Endothelial cell of umbilical vein (primary cell): ENCODE measurements at regions of chr12 and their contacts with region 1.

Region 1: DNA sequence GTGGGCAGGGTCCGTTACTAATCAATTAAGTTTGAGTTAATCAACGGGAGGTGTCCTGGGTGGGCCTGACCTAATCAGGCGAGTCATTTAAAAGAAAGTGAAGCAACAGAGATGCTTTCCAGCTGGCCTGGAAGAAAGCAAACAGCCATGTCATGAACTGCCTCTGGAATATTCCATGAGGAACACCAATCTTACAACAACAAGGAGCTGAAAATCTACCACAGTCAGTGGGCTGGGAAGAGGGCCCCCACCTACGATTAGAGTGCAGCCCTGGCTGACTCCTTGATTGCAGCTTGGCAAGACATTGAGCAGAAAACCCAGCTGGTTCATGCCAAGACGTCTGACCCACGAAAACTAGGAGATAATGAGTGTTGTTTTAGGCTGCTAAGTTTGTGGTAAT is 56.2 kb downstream of the SSPN start:
- DNase-seq: no peak
- H3K4me3 ChIP-seq: no peak overlapping the region
- H3K27ac ChIP-seq: no peak overlapping the region
- H3K4me1 ChIP-seq: peaks cover 5% of the 10 kb centered on the region
- H3K27me3 ChIP-seq: no peaks in the 10 kb centered on the region
- CTCF ChIP-seq: no peak
- POLR2A ChIP-seq: no peak

Region 2: DNA sequence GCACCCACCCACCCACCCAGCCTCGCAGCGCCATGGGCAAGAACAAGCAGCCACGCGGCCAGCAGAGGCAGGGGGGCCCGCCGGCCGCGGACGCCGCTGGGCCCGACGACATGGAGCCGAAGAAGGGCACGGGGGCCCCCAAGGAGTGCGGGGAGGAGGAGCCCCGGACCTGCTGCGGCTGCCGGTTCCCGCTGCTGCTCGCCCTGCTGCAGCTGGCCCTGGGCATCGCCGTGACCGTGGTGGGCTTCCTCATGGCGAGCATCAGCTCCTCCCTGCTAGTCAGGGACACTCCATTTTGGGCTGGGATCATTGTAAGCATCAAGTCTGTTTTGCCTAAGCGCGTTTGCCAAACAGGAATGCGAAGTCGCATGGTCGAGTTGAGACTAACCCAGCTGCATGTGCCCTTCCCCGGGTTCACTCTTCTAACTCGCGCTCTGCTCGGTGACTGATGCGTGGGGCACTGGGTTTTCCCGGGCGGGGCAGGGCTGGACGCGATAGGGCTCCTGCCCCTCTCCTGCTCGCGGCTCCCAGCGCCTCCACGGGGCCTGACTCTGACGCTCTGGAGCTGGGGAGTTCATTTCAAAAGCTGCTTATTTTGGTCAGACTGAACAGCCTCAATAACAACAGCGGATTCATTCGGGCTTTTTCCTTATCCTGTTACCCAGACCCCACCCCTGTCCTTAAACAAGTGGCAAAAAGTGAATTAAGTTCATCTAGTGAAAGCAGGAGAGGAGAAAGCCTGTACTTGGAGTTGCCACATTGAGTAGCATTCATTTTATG is 55.8 kb before region 1 on chr12:
- CTCF ChIA-PET with region 1: no interaction called
- POLR2A ChIA-PET with region 1: no interaction called
- dilution Hi-C with region 1: no loop called
- intact Hi-C with region 1: no loop called
- DNase-seq: peak; percentile 47
- H3K4me3 ChIP-seq: peak overlapping the region; percentile 0 to 59 (median 31)
- H3K27ac ChIP-seq: no peak overlapping the region
- H3K4me1 ChIP-seq: peaks cover 4% of the 10 kb centered on the region
- H3K27me3 ChIP-seq: no peaks in the 10 kb centered on the region
- CTCF ChIP-seq: no peak
- POLR2A ChIP-seq: no peak

Region 3: DNA sequence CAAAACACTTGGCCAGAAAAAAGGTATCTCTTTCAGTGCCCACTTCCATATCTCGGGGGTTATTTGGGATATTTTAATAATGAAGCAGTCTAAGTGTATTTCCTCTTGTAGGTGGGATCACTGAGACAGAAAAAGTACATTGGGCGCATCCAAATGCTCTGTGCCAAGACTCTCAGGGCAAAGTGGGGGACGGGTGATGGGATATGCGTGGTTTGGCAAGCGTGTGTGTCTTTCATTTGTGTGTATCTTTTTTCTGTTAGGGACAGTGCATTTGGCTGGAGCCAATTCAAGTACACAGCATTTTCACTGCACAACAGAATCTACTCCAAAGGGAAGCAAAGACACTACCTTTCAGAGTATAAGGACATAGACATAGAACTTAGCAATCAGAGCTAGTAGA is 26.9 kb before region 1 on chr12:
- CTCF ChIA-PET with region 1: no interaction called
- POLR2A ChIA-PET with region 1: no interaction called
- dilution Hi-C with region 1: no loop called
- intact Hi-C with region 1: no loop called
- DNase-seq: no peak
- H3K4me3 ChIP-seq: no peak overlapping the region
- H3K27ac ChIP-seq: no peak overlapping the region
- H3K4me1 ChIP-seq: peaks cover 5% of the 10 kb centered on the region
- H3K27me3 ChIP-seq: peaks cover 0 to 7% of the 10 kb centered on the region in 2 experiments
- CTCF ChIP-seq: no peak
- POLR2A ChIP-seq: no peak

Region 4: GRCh38 chr12:26239852-26240815 is 11.5 kb before region 1 on chr12:
- CTCF ChIA-PET with region 1: interaction called, 15 read pairs
- POLR2A ChIA-PET with region 1: no interaction called
- dilution Hi-C with region 1: no loop called
- intact Hi-C with region 1: no loop called
- DNase-seq: no peak
- H3K4me3 ChIP-seq: no peak overlapping the region
- H3K27ac ChIP-seq: no peak overlapping the region
- H3K4me1 ChIP-seq: no peaks in the 10 kb centered on the region
- H3K27me3 ChIP-seq: peaks cover 8 to 15% of the 10 kb centered on the region in 2 experiments
- CTCF ChIP-seq: no peak
- POLR2A ChIP-seq: no peak

Region 5: DNA sequence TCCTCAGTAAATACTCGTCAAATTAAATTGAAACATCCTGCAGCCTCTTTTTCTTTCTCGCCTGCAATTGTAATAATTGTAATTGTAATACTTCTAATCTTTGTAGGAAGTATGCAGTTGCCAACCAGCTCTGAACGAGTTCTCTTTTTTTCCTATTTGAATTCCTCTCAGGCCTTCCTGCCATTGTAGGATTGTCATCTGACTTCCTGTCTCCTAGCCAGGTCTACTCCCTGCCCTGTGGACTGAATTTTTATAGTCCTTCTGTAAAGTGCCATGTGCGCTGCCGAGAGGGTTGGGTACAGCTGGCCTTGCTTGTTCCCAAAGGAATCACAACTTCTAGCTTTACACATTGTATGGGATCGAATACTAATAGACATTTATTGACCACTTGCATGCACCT is 127.1 kb after region 1 on chr12:
- CTCF ChIA-PET with region 1: no interaction called
- POLR2A ChIA-PET with region 1: no interaction called
- dilution Hi-C with region 1: no loop called
- intact Hi-C with region 1: no loop called
- DNase-seq: peak; percentile 89
- H3K4me3 ChIP-seq: no peak overlapping the region
- H3K27ac ChIP-seq: peak overlapping the region; percentile 49
- H3K4me1 ChIP-seq: peaks cover 16% of the 10 kb centered on the region
- H3K27me3 ChIP-seq: no peaks in the 10 kb centered on the region
- CTCF ChIP-seq: no peak
- POLR2A ChIP-seq: peak; percentile 41